ENCODE measurements at regions of chr3 and their contacts with region 1.

Region 1: GRCh38 chr3:38651154-38651789 is 1.8 kb upstream of the SCN5A start:
- DNase-seq: peak; percentile 52 to 86 (median 60)
- ATAC-seq: peak; percentile 69
- H3K4me3 ChIP-seq: no peak overlapping the region
- H3K4me3 Mint-ChIP-seq: peak overlapping the region; percentile 78
- H3K27ac ChIP-seq: no peak overlapping the region
- H3K27ac Mint-ChIP-seq: no peak overlapping the region
- H3K4me1 ChIP-seq: peaks cover 32% of the 10 kb centered on the region
- H3K4me1 Mint-ChIP-seq: peaks cover 11% of the 10 kb centered on the region
- H3K27me3 ChIP-seq: peaks cover 23 to 31% of the 10 kb centered on the region in 2 experiments
- H3K27me3 Mint-ChIP-seq: peaks cover 17% of the 10 kb centered on the region
- CTCF ChIP-seq: peak; percentile 97

Region 2: GRCh38 chr3:37855363-37855970 is 795.8 kb before region 1 on chr3:
- CTCF ChIA-PET with region 1: no interaction called
- POLR2A ChIA-PET with region 1: no interaction called
- intact Hi-C with region 1: loop called in 1 of 2 experiments (anchors 5 kb)
- DNase-seq: peak; percentile 50 to 85 (median 70)
- ATAC-seq: peak; percentile 47
- H3K4me3 ChIP-seq: no peak overlapping the region
- H3K4me3 Mint-ChIP-seq: peak overlapping the region; percentile 7
- H3K27ac ChIP-seq: no peak overlapping the region
- H3K27ac Mint-ChIP-seq: no peak overlapping the region
- H3K4me1 ChIP-seq: peaks cover 8% of the 10 kb centered on the region
- H3K4me1 Mint-ChIP-seq: peaks cover 8% of the 10 kb centered on the region
- H3K27me3 ChIP-seq: no peaks in the 10 kb centered on the region
- H3K27me3 Mint-ChIP-seq: no peaks in the 10 kb centered on the region
- CTCF ChIP-seq: peak; percentile 89

Region 3: DNA sequence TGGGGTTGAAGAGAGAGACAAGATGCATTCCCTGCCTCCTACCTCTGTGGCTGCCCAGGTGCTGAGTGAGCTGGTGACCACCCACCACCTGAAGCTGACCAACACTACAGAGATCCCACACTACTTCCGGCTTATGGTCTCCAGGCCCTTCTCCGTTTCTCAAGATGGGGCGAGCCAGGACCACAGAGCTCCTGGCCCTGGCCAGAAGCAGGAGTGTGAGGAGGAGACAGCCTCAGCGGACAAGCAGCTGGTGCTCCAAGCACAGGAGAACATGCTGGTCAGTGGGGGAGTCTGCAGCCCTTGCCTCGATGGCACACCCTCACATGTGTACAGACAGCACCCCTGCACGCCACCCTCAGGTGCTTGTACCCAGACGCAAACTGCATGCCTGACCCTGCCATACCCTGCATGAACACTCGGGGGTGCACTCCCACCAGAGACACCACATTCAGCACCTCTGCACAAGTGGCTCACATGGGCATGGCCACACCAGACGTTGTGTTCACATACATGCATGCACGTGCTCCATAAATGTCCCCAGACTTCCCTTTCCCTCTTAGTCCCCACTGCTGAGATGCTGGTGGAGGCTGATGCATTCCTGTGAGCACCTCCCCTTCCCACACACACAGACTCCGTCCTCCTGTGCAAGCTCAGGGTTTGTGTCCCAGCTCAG is 533.4 kb before region 1 on chr3:
- CTCF ChIA-PET with region 1: no interaction called
- POLR2A ChIA-PET with region 1: no interaction called
- intact Hi-C with region 1: loop called in 1 of 2 experiments (anchors 10 kb)
- DNase-seq: peak; percentile 52 to 83 (median 72)
- ATAC-seq: peak; percentile 99
- H3K4me3 ChIP-seq: no peak overlapping the region
- H3K4me3 Mint-ChIP-seq: no peak overlapping the region
- H3K27ac ChIP-seq: no peak overlapping the region
- H3K27ac Mint-ChIP-seq: peak overlapping the region; percentile 8
- H3K4me1 ChIP-seq: peaks cover 6% of the 10 kb centered on the region
- H3K4me1 Mint-ChIP-seq: peaks cover 11% of the 10 kb centered on the region
- H3K27me3 ChIP-seq: no peaks in the 10 kb centered on the region
- H3K27me3 Mint-ChIP-seq: no peaks in the 10 kb centered on the region
- CTCF ChIP-seq: peak; percentile 82

Region 4: GRCh38 chr3:38496131-38496910 is 155.0 kb before region 1 on chr3 and contains the start of gene EXOG:
- CTCF ChIA-PET with region 1: interaction called, 11 read pairs
- POLR2A ChIA-PET with region 1: interaction called, 5 read pairs
- intact Hi-C with region 1: loop called (anchors 1 kb)
- DNase-seq: peak; percentile 92 to 97 (median 95)
- ATAC-seq: peak; percentile 92
- H3K4me3 ChIP-seq: peak within 1 kb of the TSS; percentile 93
- H3K4me3 Mint-ChIP-seq: peak within 1 kb of the TSS; percentile 90
- H3K27ac ChIP-seq: peak within 1 kb of the TSS in 1 of 2 donors; percentile 27
- H3K27ac Mint-ChIP-seq: peak within 1 kb of the TSS; percentile 59
- H3K4me1 ChIP-seq: peaks cover 10% of the 10 kb centered on the region
- H3K4me1 Mint-ChIP-seq: peaks cover 31% of the 10 kb centered on the region
- H3K27me3 ChIP-seq: no peaks in the 10 kb centered on the region
- H3K27me3 Mint-ChIP-seq: no peaks in the 10 kb centered on the region
- CTCF ChIP-seq: peak; percentile 89
- total RNA-seq, gene EXOG: 13.7 to 16.0 TPM

Region 5: DNA sequence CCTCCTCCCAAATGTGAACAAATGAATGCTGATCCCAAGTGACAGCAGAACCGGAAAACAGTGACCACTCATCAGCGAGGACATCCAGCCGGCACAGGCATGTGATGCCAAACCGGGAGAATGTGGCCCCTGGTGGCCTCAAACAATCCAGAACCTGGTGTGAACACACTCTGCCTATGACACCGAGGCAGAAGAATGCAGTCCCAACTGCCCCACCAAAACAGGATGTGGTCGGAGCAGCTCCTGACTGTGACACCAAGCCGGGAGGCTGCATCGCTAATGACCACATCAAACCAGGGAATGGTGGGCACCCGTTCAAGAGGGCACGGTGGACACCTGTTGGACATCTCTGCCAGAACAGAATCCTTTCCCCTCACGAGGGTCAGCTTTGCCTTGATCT is 17.2 kb before region 1 on chr3:
- CTCF ChIA-PET with region 1: interaction called, 3 read pairs
- POLR2A ChIA-PET with region 1: no interaction called
- intact Hi-C with region 1: loop called in 1 of 2 experiments (anchors 2 kb)
- DNase-seq: no peak
- ATAC-seq: no peak
- H3K4me3 ChIP-seq: no peak overlapping the region
- H3K4me3 Mint-ChIP-seq: no peak overlapping the region
- H3K27ac ChIP-seq: no peak overlapping the region
- H3K27ac Mint-ChIP-seq: no peak overlapping the region
- H3K4me1 ChIP-seq: no peaks in the 10 kb centered on the region
- H3K4me1 Mint-ChIP-seq: no peaks in the 10 kb centered on the region
- H3K27me3 ChIP-seq: no peaks in the 10 kb centered on the region
- H3K27me3 Mint-ChIP-seq: peaks cover 6% of the 10 kb centered on the region
- CTCF ChIP-seq: no peak

Measured in CD4-positive, alpha-beta T cell (primary cell).